Caco-2 (cell line): ENCODE measurements at regions of chr20 and their contacts with region 1.

Region 1: GRCh38 chr20:3071610-3072529 is at the start of gene OXT:
- DNase-seq: peak; percentile 79 to 85
- H3K4me3 ChIP-seq: peak within 1 kb of the TSS; percentile 74
- H3K4me3 Mint-ChIP-seq: peak within 1 kb of the TSS; percentile 58
- H3K27ac Mint-ChIP-seq: peak within 1 kb of the TSS; percentile 86
- H3K4me1 ChIP-seq: peaks cover 6% of the 10 kb centered on the region; the same call in 1 of the 2 replicates
- H3K4me1 Mint-ChIP-seq: peaks cover 13% of the 10 kb centered on the region
- H3K27me3 ChIP-seq: no peaks in the 10 kb centered on the region
- H3K27me3 Mint-ChIP-seq: no peaks in the 10 kb centered on the region
- CTCF ChIP-seq: no peak
- total RNA-seq, gene OXT: 1.9 and 2.7 TPM in 2 replicates

Region 2: GRCh38 chr20:2651772-2652723 is 419.8 kb before region 1 on chr20 and contains the start of gene NOP56:
- CTCF ChIA-PET with region 1: no interaction called
- POLR2A ChIA-PET with region 1: no interaction called
- intact Hi-C with region 1: no loop called
- DNase-seq: peak; percentile 95 to 99
- H3K4me3 ChIP-seq: peak within 1 kb of the TSS; percentile 99
- H3K4me3 Mint-ChIP-seq: peak within 1 kb of the TSS; percentile 90
- H3K27ac Mint-ChIP-seq: peak within 1 kb of the TSS; percentile 96
- H3K4me1 ChIP-seq: peaks cover 12% of the 10 kb centered on the region
- H3K4me1 Mint-ChIP-seq: peaks cover 7% of the 10 kb centered on the region
- H3K27me3 ChIP-seq: no peaks in the 10 kb centered on the region
- H3K27me3 Mint-ChIP-seq: no peaks in the 10 kb centered on the region
- CTCF ChIP-seq: no peak
- total RNA-seq, gene NOP56: 497 and 524 TPM in 2 replicates

Region 3: GRCh38 chr20:3051385-3052019 is 20.4 kb before region 1 on chr20:
- CTCF ChIA-PET with region 1: interaction called, 7 read pairs
- POLR2A ChIA-PET with region 1: no interaction called
- intact Hi-C with region 1: loop called (anchors 1 kb)
- DNase-seq: no peak
- H3K4me3 ChIP-seq: no peak overlapping the region
- H3K4me3 Mint-ChIP-seq: no peak overlapping the region
- H3K27ac Mint-ChIP-seq: no peak overlapping the region
- H3K4me1 ChIP-seq: peaks cover 7% of the 10 kb centered on the region; the same call in 1 of the 2 replicates
- H3K4me1 Mint-ChIP-seq: peaks cover 6% of the 10 kb centered on the region
- H3K27me3 ChIP-seq: no peaks in the 10 kb centered on the region
- H3K27me3 Mint-ChIP-seq: no peaks in the 10 kb centered on the region
- CTCF ChIP-seq: no peak

Region 4: DNA sequence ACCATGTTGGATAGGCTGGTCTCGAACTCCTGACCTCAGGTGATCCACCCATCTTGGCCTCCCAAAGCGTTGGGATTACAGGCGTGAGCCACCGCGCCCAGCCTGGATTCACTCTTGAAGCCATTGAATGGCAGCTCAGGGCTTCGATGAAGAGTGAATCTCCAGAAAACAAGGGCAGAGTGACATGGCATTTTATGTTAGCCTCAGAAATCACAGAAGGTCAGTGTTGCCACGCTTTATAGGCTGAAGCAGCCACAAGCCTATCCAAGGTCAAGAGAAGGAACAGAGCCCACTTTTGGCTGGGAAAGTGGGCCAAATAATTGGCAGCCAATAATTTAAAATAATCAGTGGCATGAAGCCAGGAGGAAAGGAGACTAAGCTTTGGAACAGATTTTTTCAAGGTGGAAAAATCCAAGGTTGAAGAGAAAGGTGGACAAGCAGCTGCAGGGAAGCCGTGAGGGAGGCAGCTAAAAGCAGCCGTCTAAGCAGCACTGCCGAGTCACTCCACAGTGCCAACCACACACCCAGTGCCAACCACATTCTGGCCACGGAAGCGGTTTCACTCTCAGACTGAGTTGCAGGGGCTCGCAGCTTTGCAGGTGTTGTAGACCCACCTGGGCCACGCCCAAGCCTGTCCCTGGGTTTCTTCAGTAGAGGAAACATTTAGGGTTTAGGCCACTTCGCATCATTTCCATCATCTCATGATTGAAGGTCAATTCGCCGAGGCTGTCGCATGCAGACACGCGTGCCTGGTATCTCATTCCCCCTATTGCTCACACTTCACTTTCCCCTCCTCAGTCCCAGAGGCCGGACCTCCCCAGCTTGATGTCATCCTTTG is 30.1 kb after region 1 on chr20:
- CTCF ChIA-PET with region 1: no interaction called
- POLR2A ChIA-PET with region 1: no interaction called
- intact Hi-C with region 1: no loop called
- DNase-seq: no peak
- H3K4me3 ChIP-seq: no peak overlapping the region
- H3K4me3 Mint-ChIP-seq: no peak overlapping the region
- H3K27ac Mint-ChIP-seq: no peak overlapping the region
- H3K4me1 ChIP-seq: 0 out of 2 replicates have a peak, but pooled peaks cover 4% of the 10 kb centered on the region
- H3K4me1 Mint-ChIP-seq: no peaks in the 10 kb centered on the region
- H3K27me3 ChIP-seq: no peaks in the 10 kb centered on the region
- H3K27me3 Mint-ChIP-seq: no peaks in the 10 kb centered on the region
- CTCF ChIP-seq: no peak

Region 5: DNA sequence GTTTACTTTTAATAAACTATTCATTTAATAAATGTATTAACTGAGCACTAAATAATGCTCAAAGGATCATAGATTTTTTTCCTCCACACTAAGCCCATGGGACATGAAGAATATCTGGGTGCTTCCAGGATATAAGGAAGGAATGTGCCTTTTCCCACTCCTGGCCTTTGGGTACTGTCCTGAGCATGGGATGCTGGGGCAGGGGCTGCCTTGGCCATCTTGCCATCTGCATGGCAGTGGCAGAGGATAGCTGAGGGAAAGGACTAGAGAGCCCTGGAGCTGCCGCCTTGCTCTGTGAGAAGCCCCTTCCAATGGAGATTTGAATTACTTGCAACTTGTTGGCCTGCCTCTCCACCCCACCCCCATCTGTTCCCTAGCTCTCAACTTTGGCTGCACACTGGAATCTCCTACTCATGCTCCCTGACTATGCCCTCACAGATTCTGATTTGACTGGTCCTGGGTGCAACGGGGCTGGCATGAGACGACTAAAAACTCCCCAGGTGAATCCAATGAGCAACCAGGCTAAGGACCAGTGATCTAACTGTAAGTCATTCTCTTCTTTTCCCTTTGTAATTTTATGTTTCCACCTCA is 117.0 kb after region 1 on chr20:
- CTCF ChIA-PET with region 1: no interaction called
- POLR2A ChIA-PET with region 1: no interaction called
- intact Hi-C with region 1: no loop called
- DNase-seq: no peak
- H3K4me3 ChIP-seq: no peak overlapping the region
- H3K4me3 Mint-ChIP-seq: no peak overlapping the region
- H3K27ac Mint-ChIP-seq: no peak overlapping the region
- H3K4me1 ChIP-seq: no peaks in the 10 kb centered on the region
- H3K4me1 Mint-ChIP-seq: no peaks in the 10 kb centered on the region
- H3K27me3 ChIP-seq: no peaks in the 10 kb centered on the region
- H3K27me3 Mint-ChIP-seq: no peaks in the 10 kb centered on the region
- CTCF ChIP-seq: no peak

Region 6: DNA sequence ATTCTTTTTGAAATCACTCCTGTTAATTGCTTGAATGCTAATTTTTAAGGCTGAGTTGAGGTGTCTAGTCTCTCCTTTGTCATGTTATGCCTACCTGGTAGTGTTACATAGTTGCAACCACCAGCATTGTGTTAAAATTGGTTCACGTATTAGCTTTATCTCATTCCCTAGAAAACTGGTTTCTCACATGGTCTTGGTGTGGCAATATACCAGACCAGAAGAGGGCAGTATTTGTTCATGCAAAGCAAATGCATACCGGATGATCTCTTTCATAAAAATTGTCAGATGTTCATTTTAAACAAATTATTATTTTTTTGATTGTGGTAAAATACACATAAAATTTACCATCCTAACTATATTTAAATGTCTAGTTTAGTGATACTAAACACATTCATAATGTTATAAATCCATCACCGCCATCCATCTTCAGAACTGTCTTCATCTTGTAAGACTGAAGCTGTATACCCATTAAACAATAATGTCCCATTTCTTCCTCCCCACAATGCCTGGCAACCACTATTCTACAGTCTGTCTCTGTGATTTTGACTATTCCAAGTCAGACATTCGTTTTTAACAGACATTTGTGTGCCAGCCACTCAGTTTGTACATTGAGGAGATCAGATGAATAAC is 491.8 kb after region 1 on chr20:
- CTCF ChIA-PET with region 1: no interaction called
- POLR2A ChIA-PET with region 1: no interaction called
- intact Hi-C with region 1: no loop called
- DNase-seq: peak in 1 of 2 experiments; percentile 65
- H3K4me3 ChIP-seq: no peak overlapping the region
- H3K4me3 Mint-ChIP-seq: no peak overlapping the region
- H3K27ac Mint-ChIP-seq: no peak overlapping the region
- H3K4me1 ChIP-seq: no peaks in the 10 kb centered on the region
- H3K4me1 Mint-ChIP-seq: no peaks in the 10 kb centered on the region
- H3K27me3 ChIP-seq: no peaks in the 10 kb centered on the region
- H3K27me3 Mint-ChIP-seq: no peaks in the 10 kb centered on the region
- CTCF ChIP-seq: peak; percentile 71 to 76